ENCODE measurements at regions of chr19 and their contacts with region 1.

Region 1: DNA sequence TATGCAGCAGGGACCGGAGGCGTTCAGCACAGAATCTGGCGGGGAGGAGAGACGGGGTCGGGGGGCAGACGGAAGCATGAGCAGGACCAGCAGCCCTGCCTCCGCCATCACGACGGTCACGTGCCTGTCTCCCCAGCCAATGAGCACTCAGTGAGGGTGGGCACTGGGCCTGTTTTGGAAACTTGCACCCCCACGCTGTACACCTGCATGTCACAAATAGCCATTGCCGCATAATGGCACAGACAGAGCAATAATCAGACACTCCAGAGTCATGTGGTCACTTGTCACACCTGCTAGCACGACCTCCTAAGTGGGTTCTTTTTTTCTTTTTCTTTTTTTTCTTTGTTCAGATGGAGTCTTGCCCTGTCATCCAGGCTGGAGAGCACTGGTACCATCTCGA is 8.8 kb downstream of the ERCC2 start:
- DNase-seq: no peak
- H3K4me3 ChIP-seq: no peak overlapping the region
- H3K27ac ChIP-seq: no peak overlapping the region
- H3K4me1 ChIP-seq: 0 out of 2 replicates have a peak, but pooled peaks cover 6% of the 10 kb centered on the region
- H3K27me3 ChIP-seq: no peaks in the 10 kb centered on the region
- CTCF ChIP-seq: no peak

Region 2: DNA sequence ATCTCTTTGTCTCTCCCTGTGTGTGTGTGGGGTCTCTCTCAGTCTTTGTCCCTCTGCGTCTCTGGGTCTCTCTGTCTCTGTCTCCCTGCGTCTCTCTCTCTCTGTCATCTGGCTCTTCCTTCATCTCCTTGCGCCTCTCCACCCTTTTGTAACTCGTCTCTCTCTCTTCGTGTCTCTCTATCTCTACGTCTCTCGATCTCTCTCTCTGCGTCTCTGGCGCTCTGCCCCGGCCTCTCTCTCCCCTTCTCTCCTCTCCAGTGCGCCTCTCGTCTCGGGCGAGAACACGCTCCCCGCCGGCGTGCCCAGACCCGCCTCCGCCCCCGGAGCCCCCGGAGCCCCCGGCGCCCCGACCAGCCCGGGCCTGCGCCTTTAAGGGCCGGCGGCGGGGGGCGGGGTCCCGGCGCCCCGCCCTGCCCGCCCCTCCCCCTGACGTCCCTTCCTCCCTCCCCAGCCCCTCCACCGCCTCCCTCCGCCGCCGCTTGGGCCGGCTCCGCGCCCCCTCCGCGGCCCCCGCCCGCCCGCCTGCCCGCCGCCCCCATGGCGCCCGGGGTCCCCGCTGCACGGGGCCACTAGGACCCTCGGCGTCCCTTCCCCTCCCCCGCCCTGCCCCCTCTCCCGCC is 110.7 kb before region 1 on chr19 and contains the start of gene MARK4:
- CTCF ChIA-PET with region 1: no interaction called
- POLR2A ChIA-PET with region 1: interaction called, 24 read pairs
- intact Hi-C with region 1: no loop called
- DNase-seq: peak in 1 of 2 experiments; percentile 40
- H3K4me3 ChIP-seq: peak within 1 kb of the TSS; percentile 80
- H3K27ac ChIP-seq: no peak within 1 kb of the TSS
- H3K4me1 ChIP-seq: peaks cover 16% of the 10 kb centered on the region
- H3K27me3 ChIP-seq: no peaks in the 10 kb centered on the region
- CTCF ChIP-seq: no peak
- total RNA-seq, gene MARK4: 49.4 and 85.8 TPM in 2 replicates

Region 3: DNA sequence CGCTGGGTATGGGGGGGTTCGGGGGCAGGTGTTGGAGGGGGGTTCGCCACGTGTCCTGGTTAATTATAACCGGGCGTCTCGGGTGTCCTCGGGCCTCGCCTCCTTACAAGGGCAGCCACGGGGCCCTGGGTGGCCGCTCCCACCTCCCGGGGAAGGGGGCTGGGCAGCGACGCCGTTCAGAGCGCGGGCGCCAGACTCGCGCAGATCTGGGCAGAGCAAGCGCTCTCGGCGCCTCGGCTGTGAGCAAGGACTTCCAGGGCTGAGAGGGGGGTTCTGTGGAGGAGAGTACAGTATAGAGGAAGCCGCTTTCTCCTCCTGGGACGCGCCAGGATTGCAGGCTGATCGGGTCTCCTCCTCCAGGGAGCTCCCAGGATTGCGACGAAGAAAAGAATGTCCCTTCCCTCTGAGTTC is 37.9 kb before region 1 on chr19:
- CTCF ChIA-PET with region 1: no interaction called
- POLR2A ChIA-PET with region 1: no interaction called
- intact Hi-C with region 1: no loop called
- DNase-seq: no peak
- H3K4me3 ChIP-seq: no peak overlapping the region
- H3K27ac ChIP-seq: no peak overlapping the region
- H3K4me1 ChIP-seq: no peaks in the 10 kb centered on the region; the same call in 1 of the 2 replicates
- H3K27me3 ChIP-seq: no peaks in the 10 kb centered on the region
- CTCF ChIP-seq: no peak

Region 4: DNA sequence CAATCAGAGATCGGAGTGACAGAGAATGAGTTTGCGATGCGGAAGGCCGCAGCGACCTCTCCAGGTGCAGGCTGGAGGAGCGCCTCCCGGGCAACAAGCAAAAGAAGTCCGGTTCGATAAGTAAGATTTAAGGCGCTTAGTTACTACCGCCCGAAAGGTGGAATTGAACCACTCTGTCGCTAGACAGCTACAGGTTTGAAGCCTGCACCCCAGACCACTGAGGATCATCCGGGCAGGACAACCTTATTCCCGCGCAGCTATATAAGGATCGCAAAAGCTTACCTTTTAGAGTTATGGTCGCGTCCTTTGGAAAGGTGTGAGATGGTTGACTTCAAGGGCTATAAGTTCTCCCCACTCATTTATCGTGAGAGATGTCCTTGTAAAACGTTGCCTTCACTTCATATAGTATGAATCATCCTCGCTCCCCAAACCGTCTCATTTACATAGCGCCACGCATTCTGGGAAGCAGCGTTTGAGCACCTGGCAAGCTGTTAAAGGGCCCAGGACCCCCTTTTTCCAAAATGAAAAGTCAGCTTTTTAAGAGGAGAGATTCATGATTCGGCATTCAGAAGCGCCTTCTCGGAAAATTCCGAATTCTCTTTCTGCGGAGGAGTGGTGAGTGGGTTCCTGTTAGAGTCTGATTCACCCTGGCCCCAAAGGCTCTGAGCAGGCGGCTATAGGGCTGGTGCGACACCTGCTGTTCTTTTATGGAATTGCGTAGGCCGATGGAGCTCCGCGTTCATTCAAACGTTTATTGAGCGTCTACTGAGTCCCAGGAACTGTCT is 117.0 kb after region 1 on chr19:
- CTCF ChIA-PET with region 1: no interaction called
- POLR2A ChIA-PET with region 1: no interaction called
- intact Hi-C with region 1: no loop called
- DNase-seq: peak; percentile 87 to 90
- H3K4me3 ChIP-seq: peak overlapping the region; percentile 62
- H3K27ac ChIP-seq: peak overlapping the region; percentile 83
- H3K4me1 ChIP-seq: peaks cover 12% of the 10 kb centered on the region
- H3K27me3 ChIP-seq: no peaks in the 10 kb centered on the region
- CTCF ChIP-seq: peak; percentile 99

Measured in PC-9 (cell line).